ENCODE measurements at regions of chr7 and their contacts with region 1.

Region 1: DNA sequence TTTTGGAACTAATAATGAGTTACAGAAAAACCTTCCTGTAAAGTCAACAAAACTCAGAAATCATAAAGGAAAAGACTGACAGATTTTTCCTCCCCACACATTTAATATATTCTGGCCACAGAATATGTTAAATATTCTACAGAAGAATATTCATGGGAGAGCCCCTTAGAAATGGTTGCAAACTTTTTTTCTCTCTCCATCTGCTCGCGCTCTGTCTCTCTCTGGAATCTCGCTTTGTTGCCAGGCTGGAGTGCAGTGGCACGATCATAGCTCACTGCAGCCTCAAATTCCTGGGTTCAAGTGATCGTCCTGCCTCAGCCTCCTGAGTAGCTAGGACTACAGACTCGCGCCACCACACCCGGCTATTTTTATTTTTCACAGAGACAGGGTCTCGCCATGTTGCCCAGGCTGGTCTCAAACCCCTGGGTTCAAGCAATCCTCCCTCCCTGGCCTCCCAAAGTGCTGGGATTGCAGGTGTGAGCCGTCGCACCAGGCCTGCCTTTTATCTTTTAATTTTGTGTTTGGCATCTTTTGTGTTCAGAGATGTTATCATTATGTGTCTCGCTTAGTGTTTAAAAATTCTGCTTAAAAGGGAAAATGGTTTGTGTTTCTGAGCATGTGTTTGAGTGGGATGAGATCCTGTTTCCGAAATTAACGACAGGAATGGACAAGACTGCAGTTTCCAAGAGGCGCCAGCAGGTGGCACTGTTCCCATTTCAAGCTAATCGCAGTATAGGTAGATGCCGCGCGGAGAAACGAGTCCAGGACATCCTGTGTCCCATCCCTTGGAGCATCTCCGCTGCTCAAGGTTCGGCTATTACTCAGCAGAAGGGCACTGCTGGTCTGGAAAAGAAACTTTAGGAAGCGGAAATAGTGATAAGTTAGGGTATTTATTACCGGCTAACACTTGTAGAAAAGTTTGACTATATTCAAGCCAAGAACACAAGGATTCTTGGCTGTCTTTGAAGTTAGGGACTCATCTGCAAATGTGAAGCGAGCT is 23.1 kb upstream of the ST7 start:
- DNase-seq: peak; percentile 84 to 92
- H3K4me3 ChIP-seq: no peak overlapping the region
- H3K27ac ChIP-seq: no peak overlapping the region
- H3K4me1 ChIP-seq: no peaks in the 10 kb centered on the region
- H3K27me3 ChIP-seq: no peaks in the 10 kb centered on the region
- CTCF ChIP-seq: peak; percentile 85 to 91 (median 88)
- POLR2A ChIP-seq: no peak

Region 2: DNA sequence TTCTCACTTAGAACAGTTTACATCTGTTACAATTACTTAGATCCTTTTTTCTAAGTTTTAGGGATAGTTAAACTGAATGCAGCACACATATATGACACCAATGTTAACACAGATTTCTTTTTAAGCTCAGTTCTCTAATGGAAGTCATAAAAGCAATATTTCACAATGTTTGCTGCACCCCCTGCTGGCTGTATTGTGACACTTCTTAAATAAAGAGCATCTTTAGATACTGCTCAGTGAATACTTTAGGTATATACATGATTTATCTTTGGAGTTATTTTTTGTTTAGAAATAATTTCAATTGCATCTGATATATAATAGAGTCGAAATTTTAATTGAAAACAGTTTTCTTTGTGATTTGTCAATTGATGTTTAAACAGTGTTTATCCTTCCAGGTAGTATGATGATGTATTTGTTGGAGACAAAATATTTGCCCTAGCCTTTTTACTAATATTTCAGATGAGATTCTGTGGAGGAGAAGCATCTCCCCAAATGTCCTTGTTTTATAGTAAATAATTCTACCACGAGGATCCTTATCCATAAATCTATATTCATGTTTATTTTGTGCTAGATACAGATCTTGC is 197.5 kb after region 1 on chr7:
- intact Hi-C with region 1: loop called (anchors 5 kb)
- DNase-seq: peak; percentile 23 to 67
- H3K4me3 ChIP-seq: no peak overlapping the region
- H3K27ac ChIP-seq: no peak overlapping the region
- H3K4me1 ChIP-seq: no peaks in the 10 kb centered on the region
- H3K27me3 ChIP-seq: no peaks in the 10 kb centered on the region
- CTCF ChIP-seq: peak; percentile 66 to 79 (median 68)
- POLR2A ChIP-seq: no peak